Activated CD8-positive, alpha-beta T cell treated with anti-CD3 and anti-CD28 coated beads for 36 hours (primary cell): ENCODE measurements at regions of chr17 and their contacts with region 1.

Region 1: DNA sequence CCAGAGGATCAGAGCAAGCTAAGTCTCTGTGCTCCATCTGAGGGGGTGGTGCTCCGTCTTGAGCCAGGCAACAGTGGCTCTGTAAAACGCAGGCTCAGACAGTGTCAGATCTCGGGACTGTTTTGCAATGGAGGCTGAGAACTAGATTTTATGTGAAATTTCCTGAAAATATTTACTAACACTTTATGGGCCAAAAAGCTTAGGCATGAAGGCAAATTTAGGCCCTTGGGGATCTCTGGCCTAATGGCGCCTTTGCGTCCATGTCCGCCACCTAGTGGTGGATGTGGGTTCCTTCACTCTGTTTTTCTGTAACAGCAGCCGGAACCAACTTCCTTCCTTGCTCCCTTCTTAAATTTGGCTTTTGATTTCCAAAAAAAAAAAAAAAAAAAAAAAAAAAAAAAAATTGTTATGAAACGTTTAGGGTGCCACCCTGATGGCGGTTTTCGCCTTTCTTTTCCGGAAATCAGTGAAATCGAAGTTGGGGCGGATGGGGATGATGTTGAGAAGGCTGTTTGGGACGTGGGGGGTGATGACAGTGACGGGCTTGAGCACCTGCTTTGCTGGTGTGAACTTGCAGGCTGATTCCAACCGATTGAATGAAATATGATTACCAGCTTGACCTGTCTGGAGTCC is 14.0 kb upstream of the ELAC2 start:
- DNase-seq: peak; percentile 65
- ATAC-seq: peak; percentile 79
- H3K4me3 Mint-ChIP-seq: no peak overlapping the region
- H3K27ac Mint-ChIP-seq: peak overlapping the region; percentile 48
- H3K4me1 Mint-ChIP-seq: peaks cover 6% of the 10 kb centered on the region
- H3K27me3 Mint-ChIP-seq: peaks cover 2% of the 10 kb centered on the region
- CTCF ChIP-seq: peak; percentile 84

Region 2: DNA sequence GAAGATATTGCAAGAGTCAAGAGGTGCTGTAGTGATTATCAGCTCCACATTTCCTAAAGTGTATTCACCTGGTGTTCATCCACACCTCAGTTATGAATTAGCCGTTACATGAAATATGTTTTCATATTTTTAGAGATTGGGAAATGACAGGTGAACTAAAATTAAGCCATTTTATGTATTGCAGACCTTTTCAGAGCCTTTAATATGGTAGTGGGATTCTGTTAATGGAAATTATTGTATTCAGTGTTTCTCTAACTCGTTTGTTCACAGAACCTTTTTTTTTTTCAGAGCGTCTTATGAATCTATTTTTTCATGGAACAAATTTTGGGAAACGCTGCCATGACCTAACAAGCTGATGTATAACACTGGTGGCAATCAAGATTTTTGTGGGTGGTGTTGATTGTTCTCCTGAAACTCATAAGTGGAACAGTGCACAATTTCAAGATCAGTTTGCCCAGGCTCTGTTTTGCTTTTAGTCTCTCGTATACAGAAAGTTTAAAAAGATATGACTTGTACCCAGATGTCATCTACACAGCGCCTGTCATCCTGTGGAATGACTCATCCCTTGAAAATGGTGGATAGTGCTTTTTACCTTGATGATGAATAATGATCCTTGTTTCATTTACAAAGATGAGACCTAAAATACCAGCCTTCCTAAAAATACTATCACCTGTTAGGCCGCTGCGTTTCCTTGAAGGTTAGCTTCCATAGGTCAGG is 153.7 kb before region 1 on chr17:
- CTCF ChIA-PET with region 1: no interaction called
- POLR2A ChIA-PET with region 1: no interaction called
- intact Hi-C with region 1: no loop called
- DNase-seq: no peak
- ATAC-seq: no peak
- H3K4me3 Mint-ChIP-seq: no peak overlapping the region
- H3K27ac Mint-ChIP-seq: no peak overlapping the region
- H3K4me1 Mint-ChIP-seq: no peaks in the 10 kb centered on the region
- H3K27me3 Mint-ChIP-seq: no peaks in the 10 kb centered on the region
- CTCF ChIP-seq: no peak

Region 3: GRCh38 chr17:12909046-12909445 is 122.8 kb before region 1 on chr17:
- CTCF ChIA-PET with region 1: no interaction called
- POLR2A ChIA-PET with region 1: no interaction called
- intact Hi-C with region 1: no loop called
- DNase-seq: no peak
- ATAC-seq: no peak
- H3K4me3 Mint-ChIP-seq: no peak overlapping the region
- H3K27ac Mint-ChIP-seq: no peak overlapping the region
- H3K4me1 Mint-ChIP-seq: no peaks in the 10 kb centered on the region
- H3K27me3 Mint-ChIP-seq: peaks cover 7% of the 10 kb centered on the region
- CTCF ChIP-seq: no peak

Region 4: DNA sequence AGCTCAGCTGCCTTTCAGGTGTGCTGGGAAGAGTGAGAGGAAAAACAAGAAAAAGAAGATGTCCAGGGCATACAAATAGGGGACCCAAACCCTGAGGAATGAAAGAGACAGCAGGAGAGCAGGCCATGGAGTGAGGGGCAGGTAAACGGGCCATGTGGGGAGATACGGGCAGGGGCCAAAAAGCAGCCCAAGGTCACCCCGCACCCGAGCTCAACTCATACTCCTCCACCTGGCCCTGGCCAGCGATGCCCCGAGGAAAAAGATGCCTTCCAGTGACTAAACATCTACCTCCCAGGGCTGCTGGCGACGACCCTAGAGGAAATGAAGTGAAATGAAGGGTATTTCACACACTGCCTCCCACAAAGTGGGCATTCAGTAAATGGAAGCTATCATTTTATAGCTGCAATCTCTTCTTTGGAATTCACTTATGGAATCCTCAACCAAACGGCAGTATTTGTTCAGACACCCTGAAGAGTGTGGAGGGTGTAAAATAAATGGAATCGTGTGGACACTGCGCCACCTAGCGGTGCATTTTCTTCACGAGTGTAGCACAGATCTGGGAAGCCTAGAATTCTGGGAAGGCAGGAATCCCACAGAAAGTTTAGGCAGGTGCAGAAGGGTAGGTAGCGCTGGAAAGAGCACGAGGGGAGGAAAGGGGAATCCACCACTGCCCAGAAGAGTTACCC is 28.9 kb before region 1 on chr17:
- CTCF ChIA-PET with region 1: interaction called, 25 read pairs
- POLR2A ChIA-PET with region 1: interaction called, 3 read pairs
- intact Hi-C with region 1: no loop called
- DNase-seq: peak; percentile 72
- ATAC-seq: no peak
- H3K4me3 Mint-ChIP-seq: no peak overlapping the region
- H3K27ac Mint-ChIP-seq: no peak overlapping the region
- H3K4me1 Mint-ChIP-seq: peaks cover 3% of the 10 kb centered on the region
- H3K27me3 Mint-ChIP-seq: no peaks in the 10 kb centered on the region
- CTCF ChIP-seq: peak; percentile 88

Region 5: GRCh38 chr17:13008461-13008860 is 23.4 kb before region 1 on chr17:
- CTCF ChIA-PET with region 1: interaction called, 214 read pairs
- POLR2A ChIA-PET with region 1: no interaction called
- intact Hi-C with region 1: no loop called
- DNase-seq: no peak
- ATAC-seq: no peak
- H3K4me3 Mint-ChIP-seq: no peak overlapping the region
- H3K27ac Mint-ChIP-seq: no peak overlapping the region
- H3K4me1 Mint-ChIP-seq: peaks cover 7% of the 10 kb centered on the region
- H3K27me3 Mint-ChIP-seq: no peaks in the 10 kb centered on the region
- CTCF ChIP-seq: no peak

Region 6: GRCh38 chr17:13017659-13018459 is 14.0 kb before region 1 on chr17 and contains the start of gene ELAC2:
- CTCF ChIA-PET with region 1: interaction called, 214 read pairs
- POLR2A ChIA-PET with region 1: interaction called, 11 read pairs
- intact Hi-C with region 1: no loop called
- DNase-seq: peak; percentile 99
- ATAC-seq: peak; percentile 98
- H3K4me3 Mint-ChIP-seq: peak within 1 kb of the TSS; percentile 90
- H3K27ac Mint-ChIP-seq: peak within 1 kb of the TSS; percentile 96
- H3K4me1 Mint-ChIP-seq: peaks cover 32% of the 10 kb centered on the region
- H3K27me3 Mint-ChIP-seq: no peaks in the 10 kb centered on the region
- CTCF ChIP-seq: no peak
- total RNA-seq, gene ELAC2: 60.1 to 67.6 TPM

Region 7: DNA sequence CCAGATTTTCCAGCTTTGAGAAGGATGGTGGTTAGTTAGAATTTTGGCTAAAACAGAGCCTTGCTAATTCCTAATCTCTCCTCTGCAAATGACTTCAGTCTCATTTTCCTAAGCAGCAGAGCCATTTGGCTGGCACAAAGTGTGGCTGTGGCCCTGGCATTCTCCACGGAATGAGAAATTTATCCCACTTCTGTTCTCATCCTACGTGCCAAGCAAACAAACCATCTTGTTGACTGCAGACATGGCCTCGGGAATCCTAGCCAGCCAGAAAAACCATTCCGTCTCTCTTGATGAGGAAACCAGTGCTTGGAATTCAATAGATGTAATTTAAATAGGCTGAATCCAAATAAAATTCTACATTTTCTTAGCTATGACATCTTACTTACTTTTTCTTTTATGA is 20.1 kb after region 1 on chr17:
- CTCF ChIA-PET with region 1: interaction called, 47 read pairs
- POLR2A ChIA-PET with region 1: no interaction called
- intact Hi-C with region 1: no loop called
- DNase-seq: no peak
- ATAC-seq: no peak
- H3K4me3 Mint-ChIP-seq: no peak overlapping the region
- H3K27ac Mint-ChIP-seq: no peak overlapping the region
- H3K4me1 Mint-ChIP-seq: no peaks in the 10 kb centered on the region
- H3K27me3 Mint-ChIP-seq: peaks cover 9% of the 10 kb centered on the region
- CTCF ChIP-seq: no peak

Region 8: GRCh38 chr17:13106171-13106570 is 74.3 kb after region 1 on chr17:
- CTCF ChIA-PET with region 1: no interaction called
- POLR2A ChIA-PET with region 1: no interaction called
- intact Hi-C with region 1: no loop called
- DNase-seq: no peak
- ATAC-seq: no peak
- H3K4me3 Mint-ChIP-seq: no peak overlapping the region
- H3K27ac Mint-ChIP-seq: no peak overlapping the region
- H3K4me1 Mint-ChIP-seq: no peaks in the 10 kb centered on the region
- H3K27me3 Mint-ChIP-seq: peaks cover 3% of the 10 kb centered on the region
- CTCF ChIP-seq: no peak

Region 9: DNA sequence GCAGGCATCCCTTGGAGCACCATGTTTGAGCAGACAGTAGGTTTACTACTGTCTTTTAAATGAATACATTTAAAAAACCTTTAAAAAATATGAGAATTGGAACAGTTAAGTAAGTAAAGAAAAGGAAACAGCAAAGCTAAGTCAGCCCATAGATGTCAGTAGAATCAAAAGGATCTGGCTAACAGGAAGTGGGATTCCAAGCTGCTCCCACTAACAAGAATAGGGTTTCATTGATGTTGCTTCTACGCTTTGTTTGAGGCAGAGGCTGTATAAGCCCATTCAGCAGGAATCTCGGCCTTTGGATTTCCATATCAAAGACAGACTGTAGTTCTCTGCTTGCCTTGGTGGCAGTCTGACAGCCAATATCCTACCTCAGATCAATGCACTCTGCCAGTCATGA is 108.9 kb after region 1 on chr17:
- CTCF ChIA-PET with region 1: no interaction called
- POLR2A ChIA-PET with region 1: no interaction called
- intact Hi-C with region 1: no loop called
- DNase-seq: no peak
- ATAC-seq: no peak
- H3K4me3 Mint-ChIP-seq: no peak overlapping the region
- H3K27ac Mint-ChIP-seq: no peak overlapping the region
- H3K4me1 Mint-ChIP-seq: no peaks in the 10 kb centered on the region
- H3K27me3 Mint-ChIP-seq: no peaks in the 10 kb centered on the region
- CTCF ChIP-seq: no peak